Naive thymus-derived CD4-positive, alpha-beta T cell (primary cell): ENCODE measurements at regions of chr3 and their contacts with region 1.

Region 1: DNA sequence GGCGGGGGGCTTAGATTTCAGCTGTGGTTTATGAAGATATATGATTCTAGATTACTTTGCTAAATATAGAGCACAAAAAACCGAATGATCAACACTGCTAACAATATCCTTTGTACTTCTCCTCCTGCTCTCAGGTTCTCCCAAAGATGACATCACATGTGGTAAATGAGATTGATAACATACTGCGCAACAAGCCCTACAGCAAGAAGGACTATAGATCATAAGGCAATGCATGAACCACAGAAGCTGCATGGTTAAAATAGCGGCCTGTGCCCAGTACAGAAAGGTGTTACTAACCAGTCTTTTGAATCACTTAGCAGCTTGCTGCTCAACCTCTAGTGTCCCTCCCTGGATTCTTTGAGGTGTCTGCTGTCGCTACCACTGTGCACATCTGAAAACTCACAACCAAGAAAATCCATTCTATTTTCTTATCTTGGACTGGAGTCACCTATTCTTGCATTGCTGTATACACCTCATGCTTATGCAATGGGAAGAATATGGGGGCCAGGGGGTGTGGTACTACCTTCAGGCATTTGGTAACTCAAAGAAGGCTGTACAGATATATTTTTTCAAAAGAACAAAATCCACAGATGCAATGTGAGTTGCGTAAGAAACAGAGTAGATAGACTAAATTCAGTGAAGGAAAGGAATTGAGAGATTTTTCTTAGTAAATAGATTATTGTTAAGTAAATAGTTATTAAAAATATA is 18.2 kb downstream of the SSR3 start:
- DNase-seq: no peak
- ATAC-seq: no peak
- H3K4me3 ChIP-seq: no peak overlapping the region
- H3K4me3 Mint-ChIP-seq: no peak overlapping the region
- H3K27ac ChIP-seq: no peak overlapping the region
- H3K27ac Mint-ChIP-seq: no peak overlapping the region
- H3K4me1 ChIP-seq: no peaks in the 10 kb centered on the region
- H3K4me1 Mint-ChIP-seq: peaks cover 0 to 14% (median 0%) of the 10 kb centered on the region in 7 donors
- H3K27me3 ChIP-seq: no peaks in the 10 kb centered on the region
- H3K27me3 Mint-ChIP-seq: no peaks in the 10 kb centered on the region

Region 2: DNA sequence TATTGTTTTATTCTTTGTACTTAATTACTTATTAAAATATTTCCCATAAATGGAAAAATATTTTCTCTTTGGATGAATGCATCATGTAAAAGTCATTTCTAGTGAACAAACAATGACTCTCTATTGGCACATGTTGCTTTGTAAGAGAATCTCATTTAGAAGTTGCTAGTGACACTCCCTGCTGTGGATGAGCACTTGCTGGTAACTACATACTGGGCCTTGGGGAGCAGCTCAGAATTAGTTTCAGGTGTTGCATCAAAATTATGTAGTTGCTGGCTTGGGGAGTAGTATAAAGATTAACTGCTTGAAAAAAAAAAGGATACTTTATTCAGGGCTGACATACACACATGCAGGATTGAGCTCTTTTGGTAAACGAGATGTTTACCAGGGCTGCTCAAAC is 496.6 kb before region 1 on chr3:
- CTCF ChIA-PET with region 1: no interaction called
- POLR2A ChIA-PET with region 1: no interaction called
- intact Hi-C with region 1: loop called in 1 of 2 experiments (anchors 1 kb)
- DNase-seq: no peak
- ATAC-seq: no peak
- H3K4me3 ChIP-seq: no peak overlapping the region
- H3K4me3 Mint-ChIP-seq: no peak overlapping the region
- H3K27ac ChIP-seq: no peak overlapping the region
- H3K27ac Mint-ChIP-seq: no peak overlapping the region
- H3K4me1 ChIP-seq: no peaks in the 10 kb centered on the region
- H3K4me1 Mint-ChIP-seq: no peaks in the 10 kb centered on the region
- H3K27me3 ChIP-seq: peaks cover 0 to 3% of the 10 kb centered on the region in 2 donors
- H3K27me3 Mint-ChIP-seq: peaks cover 5 to 20% (median 12%) of the 10 kb centered on the region in 5 donors

Region 3: GRCh38 chr3:156449712-156450574 is 86.7 kb before region 1 on chr3:
- CTCF ChIA-PET with region 1: no interaction called
- POLR2A ChIA-PET with region 1: no interaction called
- intact Hi-C with region 1: loop called in 1 of 2 experiments (anchors 1 kb)
- DNase-seq: no peak
- ATAC-seq: no peak
- H3K4me3 ChIP-seq: no peak overlapping the region
- H3K4me3 Mint-ChIP-seq: no peak overlapping the region
- H3K27ac ChIP-seq: no peak overlapping the region
- H3K27ac Mint-ChIP-seq: no peak overlapping the region
- H3K4me1 ChIP-seq: no peaks in the 10 kb centered on the region
- H3K4me1 Mint-ChIP-seq: peaks cover 0 to 2% (median 0%) of the 10 kb centered on the region in 7 donors
- H3K27me3 ChIP-seq: no peaks in the 10 kb centered on the region
- H3K27me3 Mint-ChIP-seq: peaks cover 8 to 45% (median 9%) of the 10 kb centered on the region in 5 donors

Region 4: GRCh38 chr3:156474560-156475389 is 61.9 kb before region 1 on chr3:
- CTCF ChIA-PET with region 1: no interaction called
- POLR2A ChIA-PET with region 1: no interaction called
- intact Hi-C with region 1: loop called in 1 of 2 experiments (anchors 1 kb)
- DNase-seq: peak in 2 of 9 donors; percentile 3 to 12
- ATAC-seq: no peak
- H3K4me3 ChIP-seq: no peak overlapping the region
- H3K4me3 Mint-ChIP-seq: peak overlapping the region in 3 of 10 donors; percentile 5 to 33 (median 21)
- H3K27ac ChIP-seq: no peak overlapping the region
- H3K27ac Mint-ChIP-seq: peak overlapping the region in 2 of 9 donors; percentile 5 to 22
- H3K4me1 ChIP-seq: no peaks in the 10 kb centered on the region
- H3K4me1 Mint-ChIP-seq: peaks cover 0 to 5% (median 0%) of the 10 kb centered on the region in 7 donors
- H3K27me3 ChIP-seq: no peaks in the 10 kb centered on the region
- H3K27me3 Mint-ChIP-seq: peaks cover 0 to 71% (median 9%) of the 10 kb centered on the region in 5 donors

Region 5: GRCh38 chr3:156519758-156520162 is 16.9 kb before region 1 on chr3:
- CTCF ChIA-PET with region 1: interaction called, 4 read pairs
- POLR2A ChIA-PET with region 1: interaction called, 5 read pairs
- intact Hi-C with region 1: loop called (anchors 1 to 2 kb)
- DNase-seq: no peak
- ATAC-seq: no peak
- H3K4me3 ChIP-seq: no peak overlapping the region
- H3K4me3 Mint-ChIP-seq: no peak overlapping the region
- H3K27ac ChIP-seq: no peak overlapping the region
- H3K27ac Mint-ChIP-seq: no peak overlapping the region
- H3K4me1 ChIP-seq: peaks cover 2 to 6% of the 10 kb centered on the region in 2 donors
- H3K4me1 Mint-ChIP-seq: peaks cover 6 to 26% (median 9%) of the 10 kb centered on the region in 7 donors
- H3K27me3 ChIP-seq: no peaks in the 10 kb centered on the region
- H3K27me3 Mint-ChIP-seq: peaks cover 13 to 84% (median 33%) of the 10 kb centered on the region in 5 donors

Region 6: DNA sequence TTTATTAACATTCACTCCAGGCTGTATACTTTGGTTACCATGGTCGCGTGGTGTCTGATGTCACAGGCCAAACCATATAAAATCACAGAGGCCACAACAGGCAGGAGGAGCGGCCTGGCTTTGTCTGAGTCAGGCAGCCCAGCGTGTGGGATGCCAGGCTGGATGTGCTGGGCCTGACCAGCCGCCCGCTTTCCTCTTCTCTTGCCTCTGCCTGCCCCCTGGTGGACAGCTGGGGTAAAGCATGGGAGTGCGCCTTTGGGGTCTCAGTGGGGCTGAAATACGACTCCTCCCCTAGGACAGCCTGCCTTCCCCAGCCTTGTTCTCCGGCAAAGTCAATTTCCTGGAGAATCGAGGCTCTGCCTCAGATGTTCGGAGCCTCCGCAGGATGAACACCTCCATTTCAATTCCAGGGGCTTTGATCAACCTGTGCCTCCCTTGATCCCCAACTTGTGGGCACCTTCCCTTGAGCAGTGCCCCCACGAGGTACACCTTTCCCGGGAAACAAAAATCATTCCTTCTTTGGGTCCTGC is 545.1 kb after region 1 on chr3:
- CTCF ChIA-PET with region 1: interaction called, 4 read pairs
- POLR2A ChIA-PET with region 1: interaction called, 3 read pairs
- intact Hi-C with region 1: loop called in 1 of 2 experiments (anchors 1 kb)
- DNase-seq: peak; percentile 60 to 86 (median 70)
- ATAC-seq: peak; percentile 96
- H3K4me3 ChIP-seq: no peak overlapping the region
- H3K4me3 Mint-ChIP-seq: no peak overlapping the region
- H3K27ac ChIP-seq: no peak overlapping the region
- H3K27ac Mint-ChIP-seq: peak overlapping the region in 8 of 9 donors; percentile 9 to 79 (median 56)
- H3K4me1 ChIP-seq: peaks cover 0 to 12% of the 10 kb centered on the region in 2 donors
- H3K4me1 Mint-ChIP-seq: peaks cover 0 to 54% (median 6%) of the 10 kb centered on the region in 7 donors
- H3K27me3 ChIP-seq: no peaks in the 10 kb centered on the region
- H3K27me3 Mint-ChIP-seq: no peaks in the 10 kb centered on the region